GM10248 (cell line): ENCODE measurements at regions of chr2 and their contacts with region 1.

Region 1: GRCh38 chr2:216692636-216693413 is 2.5 kb downstream of the IGFBP5 start:
- DNase-seq: peak; percentile 68
- CTCF ChIP-seq: no peak

Region 2: GRCh38 chr2:216679221-216680019 is 13.4 kb before region 1 on chr2:
- CTCF ChIA-PET with region 1: interaction called, 13 read pairs
- POLR2A ChIA-PET with region 1: no interaction called
- DNase-seq: no peak
- CTCF ChIP-seq: no peak